G401 (cell line): ENCODE measurements at regions of chr16 and their contacts with region 1.

Region 1: DNA sequence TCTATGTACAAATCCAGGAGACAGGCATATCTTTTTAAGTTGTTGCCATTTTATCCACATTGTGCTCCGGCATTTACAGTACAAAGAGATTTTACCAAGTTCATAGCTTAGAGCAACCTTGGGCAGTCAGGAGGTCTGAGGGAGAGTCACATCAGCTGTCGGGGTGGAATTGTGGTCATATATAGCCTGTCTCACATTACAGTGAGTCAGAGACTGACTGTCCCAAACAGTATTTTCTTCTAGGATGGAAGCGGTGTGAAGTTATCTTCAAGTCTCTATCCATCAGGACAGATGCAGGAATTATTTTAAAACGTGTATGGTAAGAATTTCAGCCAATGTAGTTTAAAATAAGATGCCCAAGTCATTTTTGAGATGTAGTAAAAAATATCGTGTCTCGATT is 53.0 kb downstream of the GPRC5B start:
- DNase-seq: no peak

Region 2: DNA sequence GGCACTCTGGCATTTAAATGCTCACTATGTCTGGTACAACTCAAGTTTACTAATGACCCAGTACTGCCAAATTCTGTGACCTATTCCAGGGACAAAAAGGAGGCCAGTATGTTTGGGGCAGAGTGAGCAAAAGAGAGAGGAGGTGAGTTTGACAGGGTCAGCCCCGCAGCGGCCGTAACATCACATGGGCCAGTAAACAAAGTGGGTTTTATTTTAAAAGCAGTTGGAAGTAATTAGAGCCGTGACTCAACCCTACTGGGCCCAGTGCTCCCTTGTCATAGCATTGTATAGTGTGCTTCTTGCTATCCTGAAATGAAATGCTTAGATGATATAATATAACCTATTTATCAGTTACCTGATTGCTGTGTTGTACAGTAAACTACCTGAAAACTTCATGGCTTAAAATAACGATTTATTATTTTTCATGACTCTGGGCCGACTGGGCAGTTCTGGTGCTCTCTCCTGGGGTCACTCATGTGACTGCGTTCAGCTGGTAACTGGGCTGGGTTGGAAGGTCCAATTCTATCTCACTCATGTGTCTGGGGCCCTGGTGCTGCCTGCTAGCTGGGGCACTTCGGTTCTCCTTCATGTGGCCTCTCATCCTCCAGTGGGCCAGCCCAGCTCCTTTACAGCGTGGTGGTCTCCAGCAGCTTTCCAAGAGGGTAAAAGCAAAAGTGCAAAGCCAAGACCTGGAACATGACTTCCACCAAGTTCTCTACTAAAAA is 86.2 kb before region 1 on chr16:
- in situ Hi-C with region 1: loop called (anchors 10 kb)
- DNase-seq: no peak